ENCODE measurements at regions of chr5 and their contacts with region 1.

Region 1: DNA sequence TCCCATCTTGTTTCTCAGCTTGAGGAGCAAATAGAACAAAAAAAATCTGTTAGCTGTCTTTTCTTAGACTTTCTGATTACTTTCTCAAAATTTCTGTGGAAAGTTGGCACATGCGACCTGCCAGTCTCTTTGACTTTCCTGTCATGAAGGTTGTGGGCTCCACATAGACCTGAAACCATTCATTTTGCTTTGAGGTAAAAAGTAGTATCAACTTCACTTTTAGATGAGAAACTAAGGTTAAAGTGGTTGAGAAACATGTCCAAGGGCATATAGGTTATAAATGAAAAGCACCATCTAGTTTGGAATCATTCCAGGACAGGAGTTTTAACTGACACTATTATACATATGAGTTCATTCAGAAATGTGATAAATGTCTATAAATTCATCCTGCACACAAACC is 42.7 kb downstream of the ST8SIA4 start:
- DNase-seq: no peak
- H3K4me3 Mint-ChIP-seq: no peak overlapping the region
- H3K27ac Mint-ChIP-seq: no peak overlapping the region
- H3K4me1 Mint-ChIP-seq: peaks cover 43% of the 10 kb centered on the region
- H3K27me3 Mint-ChIP-seq: no peaks in the 10 kb centered on the region

Region 2: DNA sequence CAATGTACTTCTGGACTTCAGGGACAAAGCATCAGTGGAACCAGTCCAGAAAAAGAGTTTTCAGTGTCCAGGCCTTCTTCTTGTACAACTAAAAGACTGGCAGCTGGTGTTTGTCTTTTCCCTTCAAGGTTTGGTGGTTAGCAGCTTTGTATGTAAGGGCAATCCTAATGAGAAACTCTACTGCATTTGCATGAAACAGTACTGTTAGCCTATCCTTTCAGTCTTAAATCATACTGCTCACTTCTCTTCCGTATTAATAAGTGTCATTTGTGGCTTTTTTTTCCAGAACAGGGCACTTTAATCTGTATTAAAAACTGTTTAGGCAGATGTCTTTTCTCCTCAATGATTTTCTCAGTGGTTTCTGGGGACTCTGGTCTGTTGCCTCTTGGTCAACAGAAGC is 276.3 kb before region 1 on chr5:
- CTCF ChIA-PET with region 1: no interaction called
- intact Hi-C with region 1: no loop called
- DNase-seq: no peak
- H3K4me3 Mint-ChIP-seq: no peak overlapping the region
- H3K27ac Mint-ChIP-seq: no peak overlapping the region
- H3K4me1 Mint-ChIP-seq: no peaks in the 10 kb centered on the region
- H3K27me3 Mint-ChIP-seq: no peaks in the 10 kb centered on the region

Region 3: GRCh38 chr5:100827481-100827889 is 32.9 kb before region 1 on chr5:
- CTCF ChIA-PET with region 1: no interaction called
- intact Hi-C with region 1: no loop called
- DNase-seq: peak; percentile 12
- H3K4me3 Mint-ChIP-seq: no peak overlapping the region
- H3K27ac Mint-ChIP-seq: no peak overlapping the region
- H3K4me1 Mint-ChIP-seq: peaks cover 33% of the 10 kb centered on the region
- H3K27me3 Mint-ChIP-seq: no peaks in the 10 kb centered on the region

Region 4: DNA sequence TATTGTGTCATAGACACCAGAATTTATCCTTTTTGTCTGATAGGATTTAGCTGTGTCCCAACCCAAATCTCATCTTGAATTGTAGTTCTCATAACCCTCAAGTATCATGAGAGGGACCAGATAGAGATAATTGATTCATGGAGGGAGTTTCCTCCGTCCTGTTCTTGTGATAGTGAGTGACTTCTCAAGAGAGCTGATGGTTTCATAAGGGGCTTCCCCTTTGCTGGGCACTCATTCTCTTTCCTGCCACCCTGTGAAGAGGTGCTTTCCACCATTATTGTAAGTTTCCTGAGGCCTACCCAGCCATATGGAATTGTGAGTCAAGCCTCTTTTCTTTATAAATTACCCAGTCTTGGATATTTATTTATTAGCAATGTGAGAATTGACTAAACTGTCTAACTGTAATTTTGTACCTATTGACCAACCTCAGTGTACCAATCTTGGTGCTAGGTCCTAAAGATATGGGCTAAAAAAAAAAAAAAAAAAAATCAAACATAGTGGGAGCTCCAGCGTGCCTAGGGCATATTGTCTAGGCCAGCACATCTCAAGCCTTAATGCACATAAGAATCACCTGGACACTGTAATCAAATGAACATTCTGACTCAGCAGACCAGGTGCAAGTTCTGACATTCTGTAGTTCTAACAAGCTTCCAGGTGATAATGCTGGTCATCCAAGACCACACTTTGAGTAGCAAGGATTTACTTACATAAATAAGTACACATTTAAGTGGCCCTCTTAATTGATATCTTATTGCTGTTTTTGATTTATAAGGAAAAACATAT is 12.2 kb after region 1 on chr5:
- CTCF ChIA-PET with region 1: no interaction called
- intact Hi-C with region 1: loop called (anchors 1 kb)
- DNase-seq: peak; percentile 65
- H3K4me3 Mint-ChIP-seq: no peak overlapping the region
- H3K27ac Mint-ChIP-seq: peak overlapping the region; percentile 64
- H3K4me1 Mint-ChIP-seq: peaks cover 43% of the 10 kb centered on the region
- H3K27me3 Mint-ChIP-seq: no peaks in the 10 kb centered on the region